Activated B cell treated with CpG ODN at 0.5 μM for 24 hours (primary cell): ENCODE measurements at regions of chr22 and their contacts with region 1.

Region 1: GRCh38 chr22:40050258-40050657 is 55.5 kb downstream of the FAM83F start:
- DNase-seq: peak; percentile 28
- ATAC-seq: peak; percentile 86
- H3K4me3 Mint-ChIP-seq: peak overlapping the region; percentile 79
- H3K27ac Mint-ChIP-seq: peak overlapping the region; percentile 98
- H3K4me1 Mint-ChIP-seq: peaks cover 87% of the 10 kb centered on the region
- H3K27me3 Mint-ChIP-seq: no peaks in the 10 kb centered on the region
- CTCF ChIP-seq: no peak

Region 2: DNA sequence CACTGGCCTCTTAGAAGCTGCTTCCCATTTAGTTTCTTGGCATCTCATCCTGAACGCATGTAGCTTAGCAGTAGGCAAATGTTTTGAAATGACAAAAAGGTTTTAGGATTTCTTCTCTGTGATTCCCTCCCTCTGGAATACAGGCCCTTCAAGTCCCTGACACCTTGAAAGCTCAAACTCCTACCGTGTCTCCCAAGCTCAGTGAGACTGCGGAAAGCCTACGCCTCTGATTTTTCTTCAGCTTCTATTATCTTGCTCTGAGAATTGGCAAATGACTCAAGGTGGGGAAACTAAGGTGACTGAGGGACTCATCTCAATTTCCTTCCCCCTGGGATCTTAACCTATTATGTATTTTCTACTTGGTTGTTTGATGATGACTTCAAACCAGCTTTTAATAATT is 287.0 kb before region 1 on chr22:
- CTCF ChIA-PET with region 1: no interaction called
- POLR2A ChIA-PET with region 1: no interaction called
- intact Hi-C with region 1: no loop called
- DNase-seq: no peak
- ATAC-seq: no peak
- H3K4me3 Mint-ChIP-seq: no peak overlapping the region
- H3K27ac Mint-ChIP-seq: no peak overlapping the region
- H3K4me1 Mint-ChIP-seq: peaks cover 11% of the 10 kb centered on the region
- H3K27me3 Mint-ChIP-seq: no peaks in the 10 kb centered on the region
- CTCF ChIP-seq: no peak

Region 3: DNA sequence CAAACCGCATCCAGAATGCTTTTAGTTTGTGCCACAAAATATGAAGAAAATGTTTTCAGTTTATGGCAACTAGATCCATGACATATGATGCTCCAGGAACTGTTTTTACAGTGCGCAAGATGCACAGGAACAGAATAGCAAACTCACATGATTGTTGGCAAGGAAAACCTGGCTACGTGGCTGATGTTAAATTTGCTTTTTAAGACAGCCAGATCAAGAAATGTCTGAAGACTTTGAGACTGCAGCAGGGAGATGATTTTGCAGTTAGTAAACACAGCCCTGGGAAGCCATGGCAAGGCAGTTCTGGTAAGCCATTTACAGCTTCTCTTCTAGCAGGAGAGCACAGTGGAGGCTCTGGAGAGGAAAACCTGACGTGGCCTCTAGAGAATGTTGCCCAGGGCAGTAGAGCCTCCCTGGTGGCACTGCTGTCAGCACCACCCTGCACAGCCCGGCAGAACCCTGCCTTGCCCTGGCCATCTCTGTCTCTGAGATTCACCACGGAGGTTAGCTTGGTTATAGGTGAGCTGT is 57.7 kb after region 1 on chr22:
- CTCF ChIA-PET with region 1: no interaction called
- POLR2A ChIA-PET with region 1: interaction called, 17 read pairs
- intact Hi-C with region 1: loop called (anchors 1 kb)
- DNase-seq: no peak
- ATAC-seq: peak; percentile 49
- H3K4me3 Mint-ChIP-seq: peak overlapping the region; percentile 46
- H3K27ac Mint-ChIP-seq: peak overlapping the region; percentile 8
- H3K4me1 Mint-ChIP-seq: peaks cover 81% of the 10 kb centered on the region
- H3K27me3 Mint-ChIP-seq: no peaks in the 10 kb centered on the region
- CTCF ChIP-seq: no peak

Region 4: DNA sequence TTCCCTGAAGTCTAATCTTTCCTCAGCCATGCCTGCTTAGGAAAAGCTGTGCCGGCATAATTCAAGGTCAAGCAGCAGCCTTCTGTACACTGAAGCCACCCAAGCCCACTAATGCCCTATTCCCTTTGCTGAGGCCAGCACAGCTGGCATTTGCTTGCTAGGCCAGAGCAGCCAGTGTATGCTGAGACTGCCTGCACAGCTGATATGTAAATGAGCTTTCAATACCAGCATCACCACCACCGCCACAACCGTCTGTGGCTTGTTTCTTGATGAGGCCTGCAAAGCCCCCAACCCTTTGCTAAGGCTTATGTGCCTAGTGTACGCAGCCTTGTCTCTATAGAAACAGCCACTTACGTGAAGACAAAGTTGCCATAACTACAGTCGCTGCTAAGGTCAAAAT is 71.2 kb after region 1 on chr22:
- CTCF ChIA-PET with region 1: no interaction called
- POLR2A ChIA-PET with region 1: interaction called, 4 read pairs
- intact Hi-C with region 1: loop called (anchors 5 kb)
- DNase-seq: no peak
- ATAC-seq: no peak
- H3K4me3 Mint-ChIP-seq: no peak overlapping the region
- H3K27ac Mint-ChIP-seq: no peak overlapping the region
- H3K4me1 Mint-ChIP-seq: peaks cover 19% of the 10 kb centered on the region
- H3K27me3 Mint-ChIP-seq: no peaks in the 10 kb centered on the region
- CTCF ChIP-seq: no peak

Region 5: GRCh38 chr22:40764763-40765441 is 714.6 kb after region 1 on chr22:
- CTCF ChIA-PET with region 1: no interaction called
- POLR2A ChIA-PET with region 1: no interaction called
- intact Hi-C with region 1: loop called (anchors 5 kb)
- DNase-seq: no peak
- ATAC-seq: peak; percentile 89
- H3K4me3 Mint-ChIP-seq: peak overlapping the region; percentile 69
- H3K27ac Mint-ChIP-seq: peak overlapping the region; percentile 95
- H3K4me1 Mint-ChIP-seq: peaks cover 46% of the 10 kb centered on the region
- H3K27me3 Mint-ChIP-seq: no peaks in the 10 kb centered on the region
- CTCF ChIP-seq: no peak